ENCODE measurements at regions of chr3 and their contacts with region 1.

Region 1: GRCh38 chr3:100047455-100048141 is 66.7 kb downstream of the FILIP1L start:
- DNase-seq: no peak
- ATAC-seq: no peak

Region 2: GRCh38 chr3:99842826-99843589 is 204.6 kb before region 1 on chr3:
- intact Hi-C with region 1: loop called (anchors 10 kb)
- DNase-seq: no peak
- ATAC-seq: peak; percentile 68

Region 3: GRCh38 chr3:99875929-99876841 is 171.4 kb before region 1 on chr3:
- intact Hi-C with region 1: loop called (anchors 10 kb)
- DNase-seq: peak; percentile 92
- ATAC-seq: peak; percentile 97

Region 4: DNA sequence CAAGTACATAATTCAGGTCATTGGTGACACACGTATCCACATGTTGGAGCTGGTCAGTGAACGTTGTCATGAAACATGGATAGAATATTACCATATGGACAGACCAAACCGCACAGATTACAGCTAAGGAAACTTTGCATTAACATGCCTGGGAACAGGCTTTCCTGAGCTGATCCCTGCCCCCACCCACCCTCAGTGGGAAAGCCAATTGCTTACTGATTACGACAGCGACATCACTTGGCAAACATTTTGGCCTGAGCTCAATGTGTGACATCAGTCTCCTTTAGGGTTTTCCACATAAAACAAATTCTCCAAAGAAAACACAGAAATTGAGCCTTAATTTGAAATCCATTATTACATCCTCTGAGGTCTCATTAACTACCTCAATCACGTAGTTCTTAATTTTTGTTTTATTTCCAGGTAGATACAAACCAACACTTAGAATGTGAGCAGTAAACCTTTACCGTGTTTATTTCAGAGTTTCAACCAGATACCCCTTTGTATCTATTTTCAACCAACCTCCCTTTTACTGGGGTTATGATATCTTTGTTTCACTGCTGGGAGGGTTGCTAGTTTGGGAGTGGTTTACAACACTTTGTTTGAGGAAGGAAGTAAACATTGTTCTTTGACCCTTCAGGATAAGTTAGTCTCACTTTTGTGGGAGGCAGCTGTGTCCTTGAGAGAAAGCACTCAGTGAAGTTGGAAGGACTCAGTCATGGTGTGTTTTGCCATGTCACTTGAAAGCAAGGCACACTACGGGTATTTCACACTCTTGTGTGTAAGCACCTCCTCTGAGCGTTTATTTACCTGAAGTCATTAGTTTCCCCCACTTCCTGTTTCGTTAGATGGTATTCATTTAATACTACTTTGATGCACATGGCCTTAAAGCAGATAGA is 126.9 kb before region 1 on chr3:
- intact Hi-C with region 1: loop called (anchors 5 kb)
- DNase-seq: peak; percentile 68
- ATAC-seq: peak; percentile 79

Region 5: GRCh38 chr3:99938270-99938911 is 109.2 kb before region 1 on chr3:
- intact Hi-C with region 1: loop called (anchors 5 kb)
- DNase-seq: no peak
- ATAC-seq: no peak

Region 6: DNA sequence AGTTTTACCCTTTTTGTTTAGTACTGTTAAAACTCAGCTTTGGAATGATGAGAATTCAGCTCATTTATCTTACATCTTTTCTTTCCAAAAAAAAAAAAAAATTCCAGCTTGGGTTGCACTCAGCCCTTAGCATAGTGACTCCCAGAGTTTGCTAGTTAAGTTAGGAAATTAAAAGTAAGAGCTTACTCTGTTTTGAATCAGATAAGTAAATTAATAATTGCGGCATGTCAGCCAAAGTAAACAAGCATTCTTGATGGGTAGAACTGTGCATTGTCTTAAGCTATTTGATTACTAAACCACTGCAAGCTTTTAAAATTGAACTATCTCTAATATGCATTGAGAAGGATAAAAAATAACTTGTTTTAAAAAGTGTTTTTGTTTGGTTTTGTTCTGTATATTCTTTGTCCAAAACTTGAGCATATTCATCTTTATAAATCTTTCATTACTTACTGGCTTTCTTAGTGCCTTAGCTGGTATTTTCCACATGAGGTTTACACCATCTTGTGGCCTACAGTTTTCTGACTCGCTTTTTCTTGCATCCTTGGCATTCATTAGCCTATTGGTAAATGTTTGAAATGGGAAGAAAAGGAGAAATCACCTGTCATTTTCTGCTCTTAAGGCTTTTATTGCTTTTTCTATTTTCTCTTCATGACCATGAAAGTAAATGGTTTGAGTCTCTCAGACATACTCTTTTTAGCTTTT is 40.9 kb before region 1 on chr3:
- intact Hi-C with region 1: loop called (anchors 5 kb)
- DNase-seq: no peak
- ATAC-seq: peak; percentile 33

Region 7: DNA sequence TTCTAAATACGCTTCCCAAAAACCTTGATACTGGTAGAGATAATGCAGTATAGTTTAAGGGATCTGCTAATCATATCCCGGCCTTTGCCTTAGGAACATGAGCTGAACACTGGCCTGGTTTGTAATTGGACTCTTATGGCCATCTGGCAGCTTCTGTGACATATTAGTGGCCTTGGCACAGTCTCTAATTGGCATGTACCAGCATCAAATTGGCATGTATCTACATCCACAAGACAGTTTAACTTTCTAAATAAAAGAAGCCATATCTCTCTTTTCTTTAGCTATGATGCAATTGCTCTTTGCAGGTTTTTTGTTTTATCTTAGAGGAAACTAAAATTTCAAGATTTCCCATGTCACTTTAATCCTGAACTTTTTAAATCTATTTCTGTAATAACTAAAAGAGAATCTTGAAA is 111.3 kb after region 1 on chr3:
- intact Hi-C with region 1: no loop called
- DNase-seq: no peak
- ATAC-seq: peak; percentile 85

Measured in Right ventricle myocardium inferior (tissue), 1 donor.